GM12878 (cell line): ENCODE measurements at regions of chr7 and their contacts with region 1.

Region 1: GRCh38 chr7:28298870-28299518 is 113.3 kb upstream of the CREB5 start:
- DNase-seq: no peak
- ATAC-seq: no peak
- H3K4me3 ChIP-seq: no peak overlapping the region
- H3K27ac ChIP-seq: no peak overlapping the region
- H3K4me1 ChIP-seq: no peaks in the 10 kb centered on the region
- H3K27me3 ChIP-seq: no peaks in the 10 kb centered on the region
- CTCF ChIP-seq: no peak
- EP300 ChIP-seq: no peak
- POLR2A ChIP-seq: no peak
- RAD21 ChIP-seq: peak; percentile 22; the same call in 1 of the 2 replicates

Region 2: GRCh38 chr7:28364082-28364481 is 65.1 kb after region 1 on chr7:
- CTCF ChIA-PET with region 1: interaction called, 13 read pairs
- POLR2A ChIA-PET with region 1: no interaction called
- RAD21 ChIA-PET with region 1: no interaction called
- SMC1A ChIA-PET with region 1: interaction called, 4 read pairs
- in situ Hi-C with region 1: no loop called
- intact Hi-C with region 1: no loop called
- DNase-seq: no peak
- ATAC-seq: no peak
- H3K4me3 ChIP-seq: no peak overlapping the region
- H3K27ac ChIP-seq: no peak overlapping the region
- H3K4me1 ChIP-seq: no peaks in the 10 kb centered on the region
- H3K27me3 ChIP-seq: no peaks in the 10 kb centered on the region; a peak in 1 of 4 replicates
- CTCF ChIP-seq: peak in 2 of 3 experiments; percentile 8 to 23; a peak in 2 of 6 replicates
- EP300 ChIP-seq: no peak
- POLR2A ChIP-seq: no peak
- RAD21 ChIP-seq: no peak

Region 3: GRCh38 chr7:28626624-28627262 is 327.7 kb after region 1 on chr7:
- CTCF ChIA-PET with region 1: interaction called, 3 read pairs
- POLR2A ChIA-PET with region 1: no interaction called
- RAD21 ChIA-PET with region 1: no interaction called
- SMC1A ChIA-PET with region 1: interaction called, 3 read pairs
- in situ Hi-C with region 1: no loop called
- intact Hi-C with region 1: loop called (anchors 5 kb)
- DNase-seq: no peak
- ATAC-seq: peak; percentile 57
- H3K4me3 ChIP-seq: no peak overlapping the region
- H3K27ac ChIP-seq: no peak overlapping the region
- H3K4me1 ChIP-seq: peaks cover 3% of the 10 kb centered on the region; the same call in 1 of the 2 replicates
- H3K27me3 ChIP-seq: no peaks in the 10 kb centered on the region
- CTCF ChIP-seq: peak; percentile 50 to 70 (median 67)
- EP300 ChIP-seq: no peak
- POLR2A ChIP-seq: no peak
- RAD21 ChIP-seq: peak; percentile 74